ENCODE measurements at regions of chr15 and their contacts with region 1.

Region 1: DNA sequence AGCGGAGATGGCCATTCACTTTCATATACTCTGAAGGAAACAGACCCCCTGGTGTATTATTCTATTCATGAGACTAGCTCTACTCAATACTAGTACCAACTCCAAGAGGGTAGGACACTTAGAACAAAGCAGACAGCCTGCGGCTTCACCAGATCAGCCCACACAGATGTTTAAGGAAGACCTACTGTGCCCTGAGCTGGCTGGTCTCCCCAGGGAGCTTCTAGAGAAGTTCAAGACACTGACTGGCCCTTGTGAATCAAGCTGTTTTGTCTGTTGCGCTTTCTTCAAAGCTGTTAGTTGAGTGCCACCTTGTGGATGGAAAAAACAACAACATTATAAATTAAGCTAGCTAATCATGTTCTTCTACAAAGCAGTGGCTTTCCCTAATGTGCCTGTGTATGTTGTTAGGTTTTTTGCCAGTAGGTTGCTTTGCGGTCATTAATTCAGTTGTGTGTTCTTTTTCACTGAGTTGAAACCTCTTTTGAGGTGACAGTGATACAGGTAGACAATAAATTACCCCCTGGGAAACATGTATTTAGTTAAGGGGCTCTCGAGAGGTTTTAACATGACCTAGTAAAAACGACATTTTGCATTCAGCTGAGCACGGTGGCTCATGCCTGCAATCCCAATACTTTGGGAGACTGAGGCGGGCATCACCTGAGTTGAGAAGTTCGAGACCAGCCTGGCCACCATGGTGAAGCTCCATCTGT is 64.2 kb upstream of the MYZAP start:
- DNase-seq: peak; percentile 78
- H3K4me3 ChIP-seq: no peak overlapping the region
- H3K27ac ChIP-seq: no peak overlapping the region
- H3K27me3 ChIP-seq: peaks cover 9% of the 10 kb centered on the region
- CTCF ChIP-seq: peak; percentile 65

Region 2: GRCh38 chr15:57146506-57147201 is 380.9 kb before region 1 on chr15:
- CTCF ChIA-PET with region 1: interaction called, 94 read pairs
- POLR2A ChIA-PET with region 1: no interaction called
- DNase-seq: no peak
- H3K4me3 ChIP-seq: peak overlapping the region; percentile 26
- H3K27ac ChIP-seq: no peak overlapping the region
- H3K27me3 ChIP-seq: no peaks in the 10 kb centered on the region
- CTCF ChIP-seq: peak; percentile 70

Region 3: GRCh38 chr15:57356636-57357035 is 170.9 kb before region 1 on chr15:
- CTCF ChIA-PET with region 1: interaction called, 14 read pairs
- POLR2A ChIA-PET with region 1: no interaction called
- DNase-seq: no peak
- H3K4me3 ChIP-seq: no peak overlapping the region
- H3K27ac ChIP-seq: no peak overlapping the region
- H3K27me3 ChIP-seq: peaks cover 3% of the 10 kb centered on the region
- CTCF ChIP-seq: no peak

Region 4: DNA sequence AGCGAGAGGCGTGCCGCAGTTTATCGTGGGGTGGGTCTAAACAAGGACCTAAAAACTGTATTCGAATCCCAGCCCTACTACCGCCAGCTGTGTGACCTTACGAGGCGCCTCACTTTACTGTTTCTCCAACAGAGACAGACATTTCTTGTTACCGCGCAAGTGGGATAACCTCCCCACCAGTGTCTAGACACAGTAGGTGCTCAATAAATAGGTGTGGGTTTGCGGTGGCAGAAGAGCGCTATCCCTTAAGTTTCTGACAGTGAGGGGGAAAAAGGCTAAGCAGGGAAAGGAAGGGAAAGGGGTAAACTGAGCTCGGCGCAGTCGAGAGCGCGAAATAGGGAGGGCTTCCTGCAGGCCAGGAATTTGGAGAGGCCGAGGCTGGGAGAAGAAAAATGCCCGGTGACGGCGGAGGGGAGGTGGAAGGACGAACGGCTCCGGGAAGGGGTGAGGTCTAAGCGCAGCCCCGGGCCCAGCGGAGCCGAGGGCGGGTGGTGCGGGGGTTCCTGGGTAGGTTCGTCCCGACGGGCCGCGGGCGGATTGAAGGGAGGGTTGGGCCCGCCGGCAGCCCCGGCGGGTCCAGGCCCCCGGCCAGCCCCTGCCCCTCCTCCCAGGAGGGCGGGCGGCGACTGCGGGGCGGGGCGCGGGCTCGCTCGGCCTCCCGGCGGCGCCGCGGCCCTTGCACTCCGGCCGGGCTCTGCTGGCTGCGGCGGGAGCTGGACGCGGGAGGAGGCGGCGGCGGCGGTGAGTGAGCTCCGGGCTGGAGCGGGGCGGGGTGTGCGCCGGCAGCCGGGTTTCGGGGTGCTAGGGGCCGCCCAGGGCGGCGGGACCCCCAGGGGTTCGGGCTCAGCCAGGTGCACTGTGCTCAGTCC is 151.5 kb before region 1 on chr15 and contains the start of gene CGNL1:
- CTCF ChIA-PET with region 1: interaction called, 12 read pairs
- POLR2A ChIA-PET with region 1: no interaction called
- DNase-seq: no peak
- H3K4me3 ChIP-seq: peak within 1 kb of the TSS; percentile 57
- H3K27ac ChIP-seq: no peak within 1 kb of the TSS
- H3K27me3 ChIP-seq: peaks cover 40% of the 10 kb centered on the region
- CTCF ChIP-seq: no peak
- polyA plus RNA-seq, gene CGNL1: 0.25 and 0.33 TPM in 2 replicates

Region 5: GRCh38 chr15:57485869-57486268 is 41.7 kb before region 1 on chr15:
- CTCF ChIA-PET with region 1: interaction called, 17 read pairs
- POLR2A ChIA-PET with region 1: no interaction called
- DNase-seq: peak; percentile 47
- H3K4me3 ChIP-seq: no peak overlapping the region
- H3K27ac ChIP-seq: peak overlapping the region; percentile 11
- H3K27me3 ChIP-seq: no peaks in the 10 kb centered on the region
- CTCF ChIP-seq: no peak